MCF 10A (cell line): ENCODE measurements at regions of chr7 and their contacts with region 1.

Region 1: DNA sequence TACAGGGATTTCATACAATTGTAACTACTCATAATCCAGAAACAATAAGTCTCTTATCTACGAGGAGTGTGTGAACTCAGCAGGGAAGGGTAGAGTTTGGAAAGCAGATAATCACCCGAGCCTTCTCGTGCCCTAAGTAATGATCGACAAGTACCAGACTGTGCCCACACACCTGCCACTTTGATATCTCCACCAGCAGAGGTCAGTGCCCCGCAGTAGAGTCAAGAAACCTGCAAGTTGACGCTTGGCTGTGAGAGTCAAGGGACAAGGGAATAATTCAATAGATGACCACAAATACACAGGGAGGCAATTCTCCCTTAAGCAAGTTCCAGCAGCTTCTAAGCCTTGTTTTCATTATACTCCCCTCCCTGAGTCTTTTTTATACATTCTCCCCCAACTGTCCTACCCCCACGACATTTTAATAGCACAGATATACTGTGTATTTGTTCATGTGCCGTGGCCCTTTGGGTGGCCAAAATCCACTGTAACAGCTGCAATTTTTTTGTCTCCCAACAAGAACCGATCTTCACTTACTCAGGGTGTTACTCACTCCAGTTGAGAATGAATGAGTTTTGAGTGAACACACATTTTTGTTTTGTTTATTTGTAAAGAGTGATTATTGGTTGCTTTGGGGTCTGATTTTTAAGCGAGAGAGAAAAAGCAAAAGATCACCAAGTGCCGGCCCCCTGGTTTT is 106.9 kb upstream of the RHEB start:
- DNase-seq: peak; percentile 70
- H3K4me3 Mint-ChIP-seq: no peak overlapping the region
- H3K27ac Mint-ChIP-seq: no peak overlapping the region
- H3K4me1 Mint-ChIP-seq: peaks cover 62% of the 10 kb centered on the region
- H3K27me3 Mint-ChIP-seq: no peaks in the 10 kb centered on the region
- CTCF ChIP-seq: peak; percentile 52

Region 2: GRCh38 chr7:151687523-151688218 is 61.1 kb after region 1 on chr7:
- CTCF ChIA-PET with region 1: interaction called, 13 read pairs
- POLR2A ChIA-PET with region 1: interaction called, 80 read pairs
- intact Hi-C with region 1: loop called (anchors 2 kb)
- DNase-seq: peak; percentile 99
- H3K4me3 Mint-ChIP-seq: peak overlapping the region; percentile 28
- H3K27ac Mint-ChIP-seq: peak overlapping the region; percentile 99
- H3K4me1 Mint-ChIP-seq: peaks cover 38% of the 10 kb centered on the region
- H3K27me3 Mint-ChIP-seq: no peaks in the 10 kb centered on the region
- CTCF ChIP-seq: no peak

Region 3: DNA sequence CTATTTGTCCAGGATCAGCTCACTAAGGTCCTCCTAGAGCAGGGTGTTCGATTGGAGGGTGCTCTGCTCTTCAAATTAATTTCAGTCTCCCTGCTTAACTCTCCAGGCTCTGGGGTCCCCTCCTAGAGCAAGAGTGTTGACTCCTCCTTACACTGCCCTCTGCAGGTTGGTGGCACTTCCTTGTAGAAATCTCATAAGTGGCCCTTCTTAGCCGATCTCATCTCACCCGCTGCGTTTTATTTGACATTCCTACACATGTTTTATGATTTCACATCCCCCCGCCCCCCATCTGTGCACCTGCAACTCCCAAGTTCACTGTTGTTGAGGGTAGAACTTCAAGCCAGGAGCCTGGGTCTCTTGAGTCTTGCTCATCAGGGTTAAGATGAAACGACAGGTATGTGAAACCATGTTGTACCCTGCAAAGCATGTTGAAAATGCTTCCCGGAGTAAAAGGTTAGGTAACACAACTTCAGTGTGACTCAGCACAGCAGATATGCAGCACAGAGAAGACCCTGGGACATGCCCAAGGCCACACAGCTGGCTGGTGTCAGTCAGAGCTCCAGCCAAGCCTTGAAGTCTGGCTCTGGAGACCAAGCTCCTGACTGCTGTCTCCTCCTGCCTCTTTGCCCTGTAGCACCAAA is 79.2 kb after region 1 on chr7:
- CTCF ChIA-PET with region 1: interaction called, 3 read pairs
- POLR2A ChIA-PET with region 1: interaction called, 3 read pairs
- intact Hi-C with region 1: loop called (anchors 2 kb)
- DNase-seq: peak; percentile 74
- H3K4me3 Mint-ChIP-seq: no peak overlapping the region
- H3K27ac Mint-ChIP-seq: peak overlapping the region; percentile 57
- H3K4me1 Mint-ChIP-seq: peaks cover 17% of the 10 kb centered on the region
- H3K27me3 Mint-ChIP-seq: no peaks in the 10 kb centered on the region
- CTCF ChIP-seq: peak; percentile 37

Region 4: GRCh38 chr7:152330827-152331226 is 704.3 kb after region 1 on chr7:
- CTCF ChIA-PET with region 1: no interaction called
- POLR2A ChIA-PET with region 1: no interaction called
- intact Hi-C with region 1: no loop called
- DNase-seq: no peak
- H3K4me3 Mint-ChIP-seq: no peak overlapping the region
- H3K27ac Mint-ChIP-seq: no peak overlapping the region
- H3K4me1 Mint-ChIP-seq: no peaks in the 10 kb centered on the region
- H3K27me3 Mint-ChIP-seq: no peaks in the 10 kb centered on the region
- CTCF ChIP-seq: no peak